Naive thymus-derived CD8-positive, alpha-beta T cell (primary cell): ENCODE measurements at regions of chr11 and their contacts with region 1.

Region 1: GRCh38 chr11:57530596-57531507 is at the start of gene TIMM10:
- DNase-seq: peak; percentile 78 to 98 (median 94)
- ATAC-seq: peak; percentile 91 to 93
- H3K4me3 Mint-ChIP-seq: peak within 1 kb of the TSS; percentile 88 to 98 (median 94)
- H3K27ac Mint-ChIP-seq: peak within 1 kb of the TSS; percentile 95 to 99 (median 96)
- H3K4me1 Mint-ChIP-seq: peaks cover 10 to 39% (median 38%) of the 10 kb centered on the region in 4 donors
- H3K27me3 Mint-ChIP-seq: no peaks in the 10 kb centered on the region
- polyA plus RNA-seq, gene TIMM10: 66.1 to 86.5 (median 70.5) TPM

Region 2: DNA sequence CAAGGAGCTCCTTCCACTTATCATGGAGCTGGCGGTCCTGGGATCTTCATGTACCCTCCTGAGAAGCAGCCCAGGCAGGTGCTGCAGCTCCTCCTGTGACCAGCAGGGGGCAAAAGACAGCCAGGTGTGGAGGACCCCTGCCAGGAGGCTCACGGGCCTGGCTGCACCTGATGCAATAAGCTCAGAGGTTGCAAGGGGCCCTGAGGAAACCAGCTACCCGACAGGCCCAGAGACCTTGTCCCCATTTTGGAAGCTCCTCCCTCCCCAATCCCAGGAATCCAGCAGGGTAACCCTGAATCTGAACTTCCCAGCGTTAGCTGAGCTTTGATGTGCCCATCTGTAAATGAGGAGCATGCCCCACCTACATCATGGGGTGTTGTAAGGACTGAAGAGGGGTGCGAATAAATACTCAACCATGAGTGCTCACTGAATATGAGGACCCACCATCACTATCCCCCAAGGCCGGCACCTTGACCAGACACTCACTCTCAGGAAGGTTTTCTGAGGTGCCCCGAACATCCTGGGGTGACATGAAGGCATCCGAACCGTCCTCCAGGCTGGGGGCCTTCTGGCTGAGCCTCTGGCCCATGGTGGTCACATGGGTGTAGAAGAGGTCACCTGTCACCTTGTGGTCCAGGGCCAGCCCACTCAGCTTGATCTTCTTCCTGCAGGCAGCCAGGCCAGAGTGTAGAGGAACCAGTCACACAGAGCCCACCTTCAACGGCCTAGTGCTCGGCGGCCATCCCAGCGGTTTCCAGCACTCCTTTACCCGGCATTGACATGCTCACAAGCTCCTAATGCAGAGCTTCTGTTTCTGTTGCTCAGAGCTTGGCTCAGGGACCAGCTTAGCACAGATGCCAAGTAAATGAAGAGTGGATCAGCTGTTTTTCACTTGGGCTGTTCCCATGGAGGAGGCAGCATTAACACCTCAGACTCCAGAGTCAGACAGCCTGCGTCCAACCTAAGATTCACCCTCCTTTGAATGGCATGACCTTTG is 37.0 kb before region 1 on chr11:
- POLR2A ChIA-PET with region 1: interaction called, 39 read pairs
- DNase-seq: peak; percentile 60 to 87 (median 74)
- ATAC-seq: peak; percentile 95 to 99
- H3K4me3 Mint-ChIP-seq: no peak overlapping the region
- H3K27ac Mint-ChIP-seq: peak overlapping the region in 1 of 10 donors; percentile 48
- H3K4me1 Mint-ChIP-seq: peaks cover 0 to under 1% (median 0%) of the 10 kb centered on the region in 4 donors
- H3K27me3 Mint-ChIP-seq: peaks cover 0 to 5% (median 2%) of the 10 kb centered on the region in 5 donors

Region 3: DNA sequence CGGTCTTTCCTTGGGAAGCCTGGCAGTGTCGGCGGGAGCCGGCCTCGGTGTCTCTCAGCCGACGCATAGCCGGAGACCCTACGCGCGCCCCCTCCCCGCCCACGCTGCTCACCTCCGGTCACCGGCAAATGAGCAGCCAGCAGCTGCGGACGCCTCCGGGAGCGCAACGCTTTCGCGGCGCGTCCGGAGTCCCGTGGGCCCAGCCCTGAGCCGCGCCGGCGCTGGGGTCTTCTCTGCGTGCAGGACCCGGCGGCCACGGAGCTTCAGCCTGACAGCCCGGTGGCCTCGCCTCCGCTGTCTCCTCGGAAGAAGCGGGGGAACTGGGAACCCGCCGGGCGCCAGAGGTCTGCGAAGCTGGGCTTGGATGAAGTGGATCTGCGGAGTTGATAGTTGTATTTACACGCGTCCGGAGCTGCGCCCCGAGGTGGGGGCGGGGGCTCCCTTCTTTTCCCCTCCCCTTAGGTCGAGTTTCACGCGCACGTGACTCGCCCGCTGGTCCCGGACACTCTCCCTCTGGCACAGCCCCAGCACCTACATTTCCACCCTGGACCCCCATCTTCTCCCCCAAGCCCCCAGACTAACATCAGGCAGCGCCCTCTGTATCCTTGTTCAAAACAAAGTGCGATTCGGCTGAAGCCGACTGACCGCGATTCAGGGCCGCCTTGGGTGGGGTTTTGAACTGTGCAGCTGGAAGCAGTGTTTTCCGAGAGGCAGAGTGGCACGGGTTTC is 15.4 kb before region 1 on chr11 and contains the start of gene SLC43A1:
- POLR2A ChIA-PET with region 1: interaction called, 21 read pairs
- DNase-seq: peak in 5 of 10 donors; percentile 12 to 59 (median 14)
- ATAC-seq: peak; percentile 27 to 37
- H3K4me3 Mint-ChIP-seq: peak within 1 kb of the TSS; percentile 95 to 99 (median 98)
- H3K27ac Mint-ChIP-seq: peak within 1 kb of the TSS; percentile 83 to 95 (median 91)
- H3K4me1 Mint-ChIP-seq: peaks cover 18 to 41% (median 34%) of the 10 kb centered on the region in 4 donors
- H3K27me3 Mint-ChIP-seq: no peaks in the 10 kb centered on the region
- polyA plus RNA-seq, gene SLC43A1: 15.3 to 23.2 (median 21.4) TPM

Region 4: GRCh38 chr11:57541169-57541568 is 10.3 kb after region 1 on chr11:
- POLR2A ChIA-PET with region 1: no interaction called
- DNase-seq: no peak
- ATAC-seq: no peak
- H3K4me3 Mint-ChIP-seq: no peak overlapping the region
- H3K27ac Mint-ChIP-seq: no peak overlapping the region
- H3K4me1 Mint-ChIP-seq: peaks cover 0 to 7% (median 3%) of the 10 kb centered on the region in 4 donors
- H3K27me3 Mint-ChIP-seq: no peaks in the 10 kb centered on the region

Region 5: DNA sequence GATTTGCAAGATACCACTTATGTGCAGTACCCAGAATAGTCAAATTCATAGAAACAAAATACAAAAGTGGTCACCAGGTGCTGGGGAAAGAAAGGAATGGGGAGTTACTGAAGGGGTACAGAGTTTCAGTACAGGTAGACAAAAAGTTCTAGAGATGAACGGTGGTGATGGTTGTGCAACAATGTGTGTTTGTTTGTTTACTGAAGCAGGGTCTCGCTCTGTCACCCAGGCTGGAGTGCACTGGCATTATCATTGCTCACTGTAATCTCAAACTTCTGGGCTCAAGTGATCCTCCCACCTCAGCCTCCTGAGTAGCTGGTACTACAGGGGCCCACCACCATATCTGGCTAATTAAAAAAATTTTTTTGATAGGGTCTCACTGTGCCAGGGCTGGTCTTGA is 24.5 kb after region 1 on chr11:
- POLR2A ChIA-PET with region 1: no interaction called
- DNase-seq: no peak
- ATAC-seq: no peak
- H3K4me3 Mint-ChIP-seq: no peak overlapping the region
- H3K27ac Mint-ChIP-seq: peak overlapping the region in 6 of 10 donors; percentile 3 to 86 (median 22)
- H3K4me1 Mint-ChIP-seq: peaks cover 4 to 16% (median 7%) of the 10 kb centered on the region in 4 donors
- H3K27me3 Mint-ChIP-seq: no peaks in the 10 kb centered on the region

Region 6: GRCh38 chr11:57567515-57568329 is 36.9 kb after region 1 on chr11 and contains the start of gene UBE2L6:
- POLR2A ChIA-PET with region 1: interaction called, 10 read pairs
- DNase-seq: peak; percentile 56 to 93 (median 78)
- ATAC-seq: peak; percentile 80 to 88
- H3K4me3 Mint-ChIP-seq: peak within 1 kb of the TSS; percentile 97 to 100 (median 99)
- H3K27ac Mint-ChIP-seq: peak within 1 kb of the TSS; percentile 94 to 99 (median 98)
- H3K4me1 Mint-ChIP-seq: peaks cover 18 to 67% (median 50%) of the 10 kb centered on the region in 4 donors
- H3K27me3 Mint-ChIP-seq: no peaks in the 10 kb centered on the region
- polyA plus RNA-seq, gene UBE2L6: 218 to 246 (median 239) TPM